ENCODE measurements at regions of chr3 and their contacts with region 1.

Region 1: GRCh38 chr3:31412832-31413231 is 119.9 kb upstream of the STT3B start:
- DNase-seq: no peak

Region 2: DNA sequence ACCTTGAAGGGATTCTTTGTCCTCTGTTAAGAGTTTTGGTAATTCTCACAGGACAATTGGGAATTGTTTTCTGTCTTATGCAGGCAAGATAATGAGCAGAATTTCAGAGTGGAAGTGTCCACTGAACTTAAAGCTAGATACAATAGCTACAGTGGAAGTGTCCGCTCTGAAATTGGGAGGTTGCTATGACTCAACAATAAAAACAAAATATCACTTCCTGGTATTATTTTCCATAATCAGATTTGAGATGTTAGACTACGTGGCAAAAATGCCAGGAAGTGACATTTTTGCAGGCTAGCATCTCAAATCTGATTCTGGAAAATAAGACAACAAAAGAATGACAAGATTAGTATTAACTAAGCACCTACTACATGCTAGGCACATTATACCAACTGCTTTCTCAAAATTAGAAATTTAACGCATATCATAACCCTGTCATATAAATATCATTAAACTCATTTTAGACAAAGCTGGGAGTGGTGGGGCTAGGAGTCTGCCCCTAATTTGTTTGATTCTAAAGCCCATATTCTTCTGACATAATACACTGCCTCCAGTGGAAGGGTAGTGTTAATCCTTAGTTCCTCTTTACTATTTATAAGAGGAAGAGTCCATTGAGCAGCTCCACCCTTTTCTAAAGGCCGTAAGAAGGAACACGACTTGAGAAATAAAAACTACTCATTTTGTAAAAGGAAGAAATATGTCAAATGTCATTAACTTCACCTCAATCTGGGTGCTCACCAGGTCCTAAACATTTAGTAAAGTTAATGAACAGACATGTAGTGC is 147.0 kb before region 1 on chr3:
- intact Hi-C with region 1: loop called (anchors 10 kb)
- DNase-seq: no peak

Region 3: GRCh38 chr3:31341130-31341529 is 71.7 kb before region 1 on chr3:
- intact Hi-C with region 1: no loop called
- DNase-seq: no peak

Region 4: GRCh38 chr3:31562525-31562924 is 149.7 kb after region 1 on chr3:
- intact Hi-C with region 1: no loop called
- DNase-seq: no peak

Region 5: DNA sequence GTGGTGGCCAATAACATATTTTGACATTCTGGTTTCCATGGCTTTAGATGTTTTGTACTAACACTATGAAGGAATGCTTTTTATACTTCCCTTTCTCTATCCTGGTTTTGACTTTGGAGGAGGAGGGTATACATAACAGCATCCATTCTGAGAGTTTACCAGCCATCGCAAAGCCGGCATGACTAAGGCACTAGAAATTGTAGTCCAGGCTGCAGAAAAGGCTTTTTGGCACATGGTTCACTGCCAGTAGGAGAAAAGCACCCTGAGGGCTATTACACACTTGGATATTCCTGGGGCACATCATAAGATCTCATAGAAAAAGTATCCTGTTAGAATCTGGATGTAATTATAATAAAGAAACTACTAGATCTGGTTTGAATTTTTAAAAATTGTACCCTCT is 221.6 kb after region 1 on chr3:
- intact Hi-C with region 1: no loop called
- DNase-seq: no peak

Region 6: GRCh38 chr3:31999907-32000439 is 587.1 kb after region 1 on chr3:
- intact Hi-C with region 1: no loop called
- DNase-seq: no peak

Measured in cardiac septum (tissue), 1 donor.